ENCODE measurements at regions of chrX and their contacts with region 1.

Region 1: GRCh38 chrX:13487731-13488523 is 81.5 kb upstream of the EGFL6 start:
- DNase-seq: peak; percentile 60 to 95
- H3K4me3 ChIP-seq: no peak overlapping the region; the same call in 1 of the 2 replicates
- H3K27ac ChIP-seq: peak overlapping the region; percentile 99
- H3K4me1 ChIP-seq: peaks cover 38% of the 10 kb centered on the region
- H3K27me3 ChIP-seq: no peaks in the 10 kb centered on the region
- CTCF ChIP-seq: peak; percentile 78

Region 2: DNA sequence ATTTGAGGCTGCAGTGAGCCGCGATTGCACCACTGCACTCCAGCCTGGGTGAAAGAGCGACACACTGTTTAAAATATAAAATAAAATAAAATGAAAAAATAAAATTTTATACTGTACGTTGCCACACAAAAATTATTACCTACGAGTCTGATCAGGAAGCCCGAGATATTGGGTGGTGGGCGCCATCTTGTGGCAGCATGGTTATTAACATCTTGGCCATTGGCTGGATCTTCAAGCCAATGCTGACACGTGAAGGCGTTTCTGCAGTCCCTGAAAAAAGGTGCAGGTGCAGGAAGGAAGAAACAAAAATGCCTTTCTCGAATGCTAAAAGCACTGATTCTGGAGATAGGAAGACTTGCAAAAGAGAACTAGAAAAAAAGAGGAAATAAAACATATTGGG is 586.4 kb before region 1 on chrX:
- CTCF ChIA-PET with region 1: no interaction called
- POLR2A ChIA-PET with region 1: interaction called, 4 read pairs
- intact Hi-C with region 1: loop called (anchors 1 kb)
- DNase-seq: peak; percentile 52 to 57
- H3K4me3 ChIP-seq: no peak overlapping the region
- H3K27ac ChIP-seq: no peak overlapping the region
- H3K4me1 ChIP-seq: no peaks in the 10 kb centered on the region
- H3K27me3 ChIP-seq: no peaks in the 10 kb centered on the region
- CTCF ChIP-seq: peak; percentile 73

Region 3: GRCh38 chrX:13029341-13029740 is 458.6 kb before region 1 on chrX:
- CTCF ChIA-PET with region 1: no interaction called
- POLR2A ChIA-PET with region 1: interaction called, 14 read pairs
- intact Hi-C with region 1: loop called (anchors 1 kb)
- DNase-seq: peak; percentile 74 to 81
- H3K4me3 ChIP-seq: peak overlapping the region; percentile 37; the same call in 1 of the 2 replicates
- H3K27ac ChIP-seq: peak overlapping the region; percentile 99
- H3K4me1 ChIP-seq: peaks cover 56% of the 10 kb centered on the region
- H3K27me3 ChIP-seq: no peaks in the 10 kb centered on the region
- CTCF ChIP-seq: no peak

Region 4: DNA sequence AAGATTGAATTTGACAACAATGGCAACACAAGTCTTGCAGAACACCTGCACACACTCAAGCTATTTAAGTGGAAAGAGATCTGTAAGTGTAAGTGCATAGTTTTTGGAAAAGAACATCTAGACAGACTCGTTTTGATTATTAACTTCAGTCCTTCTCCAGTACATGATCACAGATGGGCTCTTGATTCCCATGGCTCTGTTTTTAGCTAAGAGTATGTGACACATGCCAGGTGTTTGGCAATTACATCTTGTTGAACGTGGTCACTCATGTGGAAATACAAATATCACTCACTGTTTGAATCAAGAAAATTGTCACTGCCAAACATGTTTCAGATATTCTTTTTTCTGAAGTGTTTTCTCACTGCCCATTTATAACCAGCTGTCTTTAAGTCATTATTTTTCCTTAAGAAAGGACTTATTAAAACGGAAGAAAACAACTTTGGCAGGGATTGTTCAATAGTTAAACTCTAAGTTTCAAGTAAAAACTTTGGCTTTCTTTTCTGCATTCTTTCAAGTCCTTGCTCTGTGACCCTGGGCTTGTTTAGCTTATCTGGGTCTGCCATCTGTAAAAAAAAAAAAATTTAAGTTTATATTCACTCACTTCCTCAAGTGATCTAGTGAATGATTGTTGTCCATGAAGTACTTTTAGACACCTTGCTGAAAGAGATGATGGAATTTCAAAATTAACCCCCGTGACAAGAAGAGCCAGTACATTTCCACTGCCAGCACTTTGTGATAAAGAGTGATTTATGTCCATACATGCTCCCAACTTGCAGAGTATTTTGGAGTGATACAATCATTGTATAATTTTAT is 293.4 kb before region 1 on chrX:
- CTCF ChIA-PET with region 1: interaction called, 3 read pairs
- POLR2A ChIA-PET with region 1: interaction called, 5 read pairs
- intact Hi-C with region 1: loop called (anchors 1 kb)
- DNase-seq: peak in 1 of 2 experiments; percentile 90
- H3K4me3 ChIP-seq: peak overlapping the region; percentile 8; the same call in 1 of the 2 replicates
- H3K27ac ChIP-seq: peak overlapping the region; percentile 93
- H3K4me1 ChIP-seq: peaks cover 74% of the 10 kb centered on the region
- H3K27me3 ChIP-seq: no peaks in the 10 kb centered on the region
- CTCF ChIP-seq: no peak

Region 5: GRCh38 chrX:13334491-13334890 is 153.4 kb before region 1 on chrX:
- CTCF ChIA-PET with region 1: no interaction called
- POLR2A ChIA-PET with region 1: no interaction called
- intact Hi-C with region 1: loop called (anchors 2 kb)
- DNase-seq: peak in 1 of 2 experiments; percentile 53
- H3K4me3 ChIP-seq: no peak overlapping the region
- H3K27ac ChIP-seq: no peak overlapping the region
- H3K4me1 ChIP-seq: no peaks in the 10 kb centered on the region
- H3K27me3 ChIP-seq: no peaks in the 10 kb centered on the region
- CTCF ChIP-seq: no peak

Region 6: DNA sequence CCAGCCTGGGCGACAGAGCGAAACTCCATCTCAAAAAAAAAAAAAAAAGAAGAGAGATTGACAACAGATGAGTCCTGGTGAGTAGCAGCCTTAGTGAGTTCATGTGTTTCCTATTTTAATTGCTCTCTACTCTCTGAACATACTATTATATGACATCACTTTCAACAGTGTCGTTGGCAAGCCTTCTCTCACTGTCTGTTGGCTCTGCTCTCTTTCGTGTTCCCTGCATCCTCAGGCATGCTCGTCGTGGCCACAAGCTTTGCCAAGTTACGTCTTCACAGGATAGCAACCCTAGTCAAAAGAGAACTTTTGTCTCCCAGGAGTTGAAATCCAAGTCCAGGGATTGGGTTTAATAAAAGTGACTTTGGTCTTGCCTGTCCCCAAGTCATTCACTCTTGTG is 35.6 kb before region 1 on chrX:
- CTCF ChIA-PET with region 1: no interaction called
- POLR2A ChIA-PET with region 1: interaction called, 12 read pairs
- intact Hi-C with region 1: no loop called
- DNase-seq: no peak
- H3K4me3 ChIP-seq: no peak overlapping the region
- H3K27ac ChIP-seq: no peak overlapping the region
- H3K4me1 ChIP-seq: no peaks in the 10 kb centered on the region
- H3K27me3 ChIP-seq: no peaks in the 10 kb centered on the region
- CTCF ChIP-seq: no peak

Region 7: GRCh38 chrX:13545726-13546125 is 57.8 kb after region 1 on chrX:
- CTCF ChIA-PET with region 1: no interaction called
- POLR2A ChIA-PET with region 1: no interaction called
- intact Hi-C with region 1: no loop called
- DNase-seq: no peak
- H3K4me3 ChIP-seq: no peak overlapping the region
- H3K27ac ChIP-seq: no peak overlapping the region
- H3K4me1 ChIP-seq: no peaks in the 10 kb centered on the region
- H3K27me3 ChIP-seq: no peaks in the 10 kb centered on the region
- CTCF ChIP-seq: no peak

Measured in PC-9 (cell line).